CD4-positive, alpha-beta T cell (primary cell): ENCODE measurements at regions of chr15 and their contacts with region 1.

Region 1: GRCh38 chr15:78811124-78811824 is at the start of gene ADAMTS7:
- DNase-seq: peak; percentile 16 to 66 (median 38)
- ATAC-seq: peak; percentile 57
- H3K4me3 ChIP-seq: peak within 1 kb of the TSS; percentile 48
- H3K4me3 Mint-ChIP-seq: peak within 1 kb of the TSS; percentile 82
- H3K27ac ChIP-seq: no peak within 1 kb of the TSS
- H3K27ac Mint-ChIP-seq: no peak within 1 kb of the TSS
- H3K4me1 ChIP-seq: peaks cover 20% of the 10 kb centered on the region
- H3K4me1 Mint-ChIP-seq: peaks cover 15% of the 10 kb centered on the region
- H3K27me3 ChIP-seq: peaks cover 40 to 58% of the 10 kb centered on the region in 2 experiments
- H3K27me3 Mint-ChIP-seq: peaks cover 64% of the 10 kb centered on the region
- CTCF ChIP-seq: peak; percentile 60
- total RNA-seq, gene ADAMTS7: 0.11 to 0.30 TPM

Region 2: GRCh38 chr15:78761891-78762385 is 49.3 kb before region 1 on chr15:
- CTCF ChIA-PET with region 1: no interaction called
- POLR2A ChIA-PET with region 1: no interaction called
- intact Hi-C with region 1: loop called in 1 of 2 experiments (anchors 5 kb)
- DNase-seq: no peak
- ATAC-seq: no peak
- H3K4me3 ChIP-seq: peak overlapping the region; percentile 32
- H3K4me3 Mint-ChIP-seq: peak overlapping the region; percentile 56
- H3K27ac ChIP-seq: peak overlapping the region; percentile 57 to 58
- H3K27ac Mint-ChIP-seq: peak overlapping the region; percentile 86
- H3K4me1 ChIP-seq: peaks cover 33% of the 10 kb centered on the region
- H3K4me1 Mint-ChIP-seq: peaks cover 22% of the 10 kb centered on the region
- H3K27me3 ChIP-seq: no peaks in the 10 kb centered on the region
- H3K27me3 Mint-ChIP-seq: no peaks in the 10 kb centered on the region
- CTCF ChIP-seq: no peak

Region 3: DNA sequence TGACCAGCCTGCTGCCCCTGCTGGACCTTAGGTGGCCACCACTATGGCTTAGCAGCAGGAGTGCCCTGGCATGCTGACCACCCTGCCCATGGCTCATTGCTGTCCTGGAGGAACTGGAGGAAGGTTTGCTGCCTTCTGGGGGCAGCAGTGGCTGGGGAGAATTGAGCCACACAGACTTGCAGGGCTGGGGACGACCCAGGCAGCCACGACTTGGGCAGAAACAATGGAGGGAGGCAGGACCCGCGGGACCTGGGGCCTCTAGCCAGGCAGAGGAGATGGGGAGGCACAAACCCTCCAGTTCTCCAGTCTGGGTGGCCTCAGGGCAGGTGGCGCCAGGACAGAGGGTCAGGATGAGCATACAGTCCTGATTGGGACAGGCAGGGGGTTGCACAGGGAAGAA is 32.9 kb before region 1 on chr15:
- CTCF ChIA-PET with region 1: no interaction called
- POLR2A ChIA-PET with region 1: no interaction called
- intact Hi-C with region 1: no loop called
- DNase-seq: no peak
- ATAC-seq: no peak
- H3K4me3 ChIP-seq: no peak overlapping the region
- H3K4me3 Mint-ChIP-seq: no peak overlapping the region
- H3K27ac ChIP-seq: no peak overlapping the region
- H3K27ac Mint-ChIP-seq: no peak overlapping the region
- H3K4me1 ChIP-seq: no peaks in the 10 kb centered on the region
- H3K4me1 Mint-ChIP-seq: no peaks in the 10 kb centered on the region
- H3K27me3 ChIP-seq: no peaks in the 10 kb centered on the region
- H3K27me3 Mint-ChIP-seq: no peaks in the 10 kb centered on the region
- CTCF ChIP-seq: no peak